GM10248 (cell line): ENCODE measurements at regions of chr3 and their contacts with region 1.

Region 1: GRCh38 chr3:45656575-45657363 is 32.4 kb upstream of the SACM1L start:
- DNase-seq: peak; percentile 80
- CTCF ChIP-seq: peak; percentile 93

Region 2: GRCh38 chr3:45043728-45044299 is 613.0 kb before region 1 on chr3:
- CTCF ChIA-PET with region 1: interaction called, 19 read pairs
- POLR2A ChIA-PET with region 1: no interaction called
- DNase-seq: no peak
- CTCF ChIP-seq: no peak

Region 3: DNA sequence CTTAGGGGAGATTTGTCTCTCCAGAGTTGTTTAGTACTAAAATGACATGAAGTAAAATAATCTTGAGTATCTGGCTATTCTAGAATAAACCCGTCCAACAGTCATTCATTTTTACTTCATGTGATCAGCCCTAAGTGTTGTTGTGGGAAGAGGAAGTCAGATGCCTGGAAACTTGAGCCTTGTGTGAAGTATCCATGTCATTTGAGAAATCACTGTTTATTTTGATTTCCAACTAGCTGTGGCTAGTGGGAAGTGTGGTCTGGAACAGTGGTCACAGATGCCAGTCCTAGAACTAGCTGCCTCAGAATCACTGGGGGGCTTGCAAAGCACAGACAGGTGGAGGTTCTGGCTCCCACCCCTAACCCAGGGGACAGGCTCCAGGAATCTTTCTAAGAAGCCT is 139.9 kb before region 1 on chr3:
- CTCF ChIA-PET with region 1: interaction called, 84 read pairs
- POLR2A ChIA-PET with region 1: no interaction called
- DNase-seq: no peak
- CTCF ChIP-seq: no peak

Region 4: GRCh38 chr3:45579251-45579650 is 77.5 kb before region 1 on chr3:
- CTCF ChIA-PET with region 1: interaction called, 10 read pairs
- POLR2A ChIA-PET with region 1: interaction called, 8 read pairs
- DNase-seq: no peak
- CTCF ChIP-seq: no peak

Region 5: GRCh38 chr3:45630325-45630724 is 26.4 kb before region 1 on chr3:
- CTCF ChIA-PET with region 1: interaction called, 12 read pairs
- POLR2A ChIA-PET with region 1: no interaction called
- DNase-seq: no peak
- CTCF ChIP-seq: no peak

Region 6: DNA sequence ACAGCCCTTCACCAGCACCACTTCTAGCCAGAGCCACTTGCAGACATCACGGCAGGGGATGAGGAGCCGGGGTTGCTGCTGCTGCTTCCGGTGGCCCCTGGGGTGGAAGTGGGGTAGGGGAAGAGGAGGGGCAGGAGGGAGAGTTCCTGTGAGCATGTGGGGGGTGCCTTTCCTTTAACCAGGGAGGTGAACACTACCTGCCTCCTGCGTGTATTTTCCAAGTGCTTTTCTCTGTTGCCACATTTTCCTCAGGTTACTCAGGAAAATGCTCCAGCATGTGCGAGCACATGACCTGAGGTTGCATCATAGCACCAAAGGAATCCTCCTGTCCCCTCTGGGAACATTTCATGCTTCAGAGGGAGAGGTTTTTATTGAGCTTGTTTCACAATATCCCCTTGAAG is 20.3 kb after region 1 on chr3:
- CTCF ChIA-PET with region 1: interaction called, 17 read pairs
- POLR2A ChIA-PET with region 1: no interaction called
- DNase-seq: no peak
- CTCF ChIP-seq: no peak